Prostate gland (tissue), 2 donors: ENCODE measurements at regions of chr19 and their contacts with region 1.

Region 1: DNA sequence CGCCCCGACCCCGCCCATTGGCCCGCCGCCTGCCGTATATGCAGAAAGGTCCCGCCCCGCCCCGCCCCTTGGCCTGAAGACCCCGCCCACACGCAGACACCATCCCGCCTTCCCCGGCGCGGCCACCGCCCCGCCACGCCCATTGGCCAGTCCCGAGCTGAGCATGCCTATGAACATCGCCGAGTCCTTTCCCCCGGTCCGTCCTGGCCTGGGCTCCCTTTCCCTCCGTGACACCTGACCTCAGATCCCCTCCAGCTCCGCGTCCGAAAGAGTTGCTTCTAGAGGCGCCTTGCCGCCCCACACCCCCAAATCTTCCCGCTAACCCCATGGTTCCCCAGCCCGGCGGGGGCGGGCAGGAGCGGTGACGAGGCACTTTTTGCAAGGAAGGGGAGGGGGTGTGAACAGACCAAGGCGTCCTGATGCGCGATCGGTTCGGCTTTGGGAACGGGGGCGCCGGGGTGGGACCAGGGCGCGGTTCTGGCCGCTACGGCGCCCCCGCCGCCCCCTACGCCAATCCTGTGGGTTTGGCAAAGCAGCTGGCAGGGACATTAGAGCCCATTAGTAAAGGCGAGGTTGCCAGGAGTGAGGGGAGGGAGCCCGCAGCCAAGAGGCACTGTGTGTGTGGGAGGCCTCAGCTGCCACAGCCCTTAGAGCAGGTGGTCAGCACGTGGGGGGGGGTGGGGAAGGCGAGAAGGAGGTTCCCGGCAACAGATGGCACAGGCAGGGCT is 406 bp upstream of the NUMBL start:
- DNase-seq: peak; percentile 96
- H3K4me3 ChIP-seq: peak overlapping the region; percentile 69 to 84
- H3K27ac ChIP-seq: peak overlapping the region; percentile 74 to 83
- H3K4me1 ChIP-seq: peaks cover 16% of the 10 kb centered on the region
- H3K27me3 ChIP-seq: no peaks in the 10 kb centered on the region
- CTCF ChIP-seq: no peak
- POLR2A ChIP-seq: peak; percentile 22

Region 2: DNA sequence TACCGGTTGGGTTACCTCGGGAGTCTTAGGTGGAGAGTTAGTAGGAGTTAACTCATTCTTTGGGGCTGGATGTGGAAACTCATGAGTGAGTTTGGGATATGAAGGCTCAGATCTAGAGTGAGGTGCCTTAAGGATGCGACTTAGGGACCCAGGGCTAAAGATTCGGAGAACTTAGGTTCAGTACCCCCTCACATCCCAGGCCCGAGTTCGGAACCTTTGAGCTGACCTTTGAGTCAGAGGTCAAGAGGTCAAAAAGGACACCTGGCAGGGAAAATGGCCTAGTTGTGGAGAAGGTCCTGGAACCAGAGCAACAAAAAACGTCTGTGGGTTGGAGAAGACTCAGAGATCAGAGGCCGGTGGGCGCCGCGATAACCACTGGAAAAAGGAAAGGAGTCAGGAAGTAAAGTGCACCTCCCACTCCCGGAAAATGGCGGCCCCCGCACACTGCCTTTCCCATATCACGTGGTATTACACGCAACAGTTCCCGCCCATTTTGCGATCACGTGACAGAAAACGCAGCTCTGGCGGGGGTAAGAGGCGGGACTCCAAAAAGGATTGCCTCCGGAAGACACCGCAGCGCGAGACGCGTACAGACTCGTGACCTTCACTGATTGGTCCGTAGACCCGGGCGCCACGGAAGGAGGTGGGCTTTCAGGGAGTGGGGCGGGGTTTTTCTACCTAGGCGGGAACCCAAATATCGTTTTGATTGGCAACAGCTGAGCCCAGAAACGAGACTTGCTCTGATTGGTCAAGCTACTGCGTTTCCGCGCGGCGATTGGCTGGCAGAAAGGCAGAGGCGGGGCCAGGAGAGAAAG is 59.4 kb after region 1 on chr19 and contains the start of gene ACTMAP:
- intact Hi-C with region 1: loop called (anchors 2 kb)
- DNase-seq: peak; percentile 100
- H3K4me3 ChIP-seq: peak within 1 kb of the TSS; percentile 71 to 80
- H3K27ac ChIP-seq: peak within 1 kb of the TSS; percentile 94 to 98
- H3K4me1 ChIP-seq: peaks cover 9% of the 10 kb centered on the region
- H3K27me3 ChIP-seq: no peaks in the 10 kb centered on the region
- CTCF ChIP-seq: peak in 1 of 4 experiments; percentile 37
- POLR2A ChIP-seq: peak; percentile 90
- total RNA-seq, gene ACTMAP: 4.4 to 25.2 TPM